Gastrocnemius medialis (tissue), 4 donors: ENCODE measurements at regions of chr4 and their contacts with region 1.

Region 1: DNA sequence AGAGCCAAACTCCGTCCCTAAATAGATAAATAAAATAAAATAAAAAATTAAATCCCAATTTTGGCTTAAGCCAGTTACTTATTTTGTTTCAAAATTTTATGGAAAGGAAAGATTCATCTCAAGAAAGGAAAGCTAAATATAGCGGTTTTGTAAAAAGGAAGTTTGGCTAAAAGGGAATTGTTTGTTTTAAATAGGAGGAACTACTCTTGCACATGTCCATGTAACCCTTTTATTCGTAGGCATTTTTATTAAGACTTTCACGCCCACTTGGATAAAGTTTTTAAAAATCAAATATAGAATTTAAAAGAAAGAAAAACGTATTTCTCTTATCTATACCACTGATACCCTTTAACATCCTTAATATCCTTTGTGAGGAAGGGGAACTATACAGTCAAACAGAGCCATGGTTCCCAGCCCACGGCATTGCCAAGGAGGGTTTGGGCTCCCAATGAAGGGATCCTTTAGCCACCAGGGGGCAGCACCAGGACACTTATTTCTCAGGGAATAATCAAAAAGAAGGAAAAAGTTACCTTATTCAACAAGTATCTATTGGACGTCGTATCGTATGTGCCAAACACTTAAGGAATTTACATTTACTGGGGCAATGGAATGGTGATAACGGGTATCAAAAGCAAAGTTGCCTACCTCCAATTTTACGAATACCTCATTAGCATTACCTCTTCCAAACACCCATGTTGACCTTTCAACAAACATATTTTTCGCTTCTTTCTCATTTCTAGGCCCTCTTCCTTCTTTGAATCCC is 27.7 kb downstream of the CDKN2AIP start:
- DNase-seq: peak; percentile 58 to 68
- ATAC-seq: peak; percentile 85 to 86
- H3K4me3 ChIP-seq: peak overlapping the region in 3 of 4 donors; percentile 11 to 27 (median 14)
- H3K27ac ChIP-seq: no peak overlapping the region
- H3K4me1 ChIP-seq: peaks cover 0 to 4% of the 10 kb centered on the region in 2 donors
- H3K27me3 ChIP-seq: no peaks in the 10 kb centered on the region
- CTCF ChIP-seq: peak; percentile 74 to 93 (median 85)
- POLR2A ChIP-seq: no peak

Region 2: GRCh38 chr4:183335369-183335940 is 136.7 kb before region 1 on chr4:
- in situ Hi-C with region 1: no loop called
- intact Hi-C with region 1: no loop called
- DNase-seq: no peak
- ATAC-seq: no peak
- H3K4me3 ChIP-seq: no peak overlapping the region
- H3K27ac ChIP-seq: no peak overlapping the region
- H3K4me1 ChIP-seq: no peaks in the 10 kb centered on the region
- H3K27me3 ChIP-seq: no peaks in the 10 kb centered on the region
- CTCF ChIP-seq: no peak
- POLR2A ChIP-seq: no peak

Region 3: DNA sequence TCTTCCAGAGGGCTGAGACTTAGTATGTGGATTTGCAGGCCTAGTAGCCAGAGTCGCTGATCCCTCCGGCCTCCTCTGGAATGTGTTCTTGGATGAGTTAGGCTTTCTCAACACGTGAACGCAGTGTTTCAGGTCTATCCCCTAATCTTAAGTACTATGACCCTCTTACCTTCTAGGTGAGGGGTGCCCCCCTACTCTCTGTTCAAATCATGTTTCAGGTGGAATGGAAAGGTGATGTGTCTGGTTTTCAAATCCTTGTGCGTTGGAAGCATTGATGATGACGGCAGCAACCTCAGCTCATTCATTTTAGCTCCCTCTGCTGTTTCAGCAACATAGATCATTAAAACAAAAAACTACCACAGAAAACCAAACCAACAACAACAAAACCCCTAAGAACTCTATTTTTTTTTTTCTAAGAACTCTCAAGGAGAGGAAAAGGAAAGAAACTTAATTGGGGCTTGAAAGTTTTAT is 130.5 kb after region 1 on chr4:
- in situ Hi-C with region 1: loop called in 2 of 4 experiments (anchors 5 kb)
- intact Hi-C with region 1: loop called (anchors 1 kb)
- DNase-seq: no peak
- ATAC-seq: peak in 1 of 2 donors; percentile 46
- H3K4me3 ChIP-seq: no peak overlapping the region
- H3K27ac ChIP-seq: peak overlapping the region in 3 of 4 donors; percentile 7 to 28 (median 24)
- H3K4me1 ChIP-seq: peaks cover 0 to 5% of the 10 kb centered on the region in 2 donors
- H3K27me3 ChIP-seq: no peaks in the 10 kb centered on the region
- CTCF ChIP-seq: peak; percentile 35 to 51 (median 42)
- POLR2A ChIP-seq: no peak

Region 4: DNA sequence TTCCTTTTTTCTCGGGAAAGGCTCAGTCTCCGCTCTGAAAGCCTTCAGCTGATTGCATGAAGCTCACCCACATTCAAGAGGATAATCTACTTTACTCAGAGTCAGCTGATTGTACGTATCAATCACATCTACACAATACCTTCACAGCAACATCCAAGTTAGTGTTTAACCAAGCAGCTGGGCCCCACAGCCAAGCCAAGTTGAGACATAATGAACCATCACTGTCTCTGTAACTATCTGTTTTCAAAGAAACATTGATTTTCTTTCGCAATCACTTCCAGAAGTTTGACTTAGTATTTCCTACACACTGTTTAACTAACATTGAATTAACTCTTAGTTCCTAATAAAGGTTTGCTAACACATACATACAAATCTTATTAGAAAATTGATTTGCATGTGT is 146.6 kb after region 1 on chr4:
- in situ Hi-C with region 1: no loop called
- intact Hi-C with region 1: loop called (anchors 1 kb)
- DNase-seq: no peak
- ATAC-seq: peak; percentile 56 to 64
- H3K4me3 ChIP-seq: peak overlapping the region in 1 of 4 donors; percentile 30
- H3K27ac ChIP-seq: peak overlapping the region; percentile 69 to 81 (median 76)
- H3K4me1 ChIP-seq: peaks cover 7 to 9% of the 10 kb centered on the region in 2 donors
- H3K27me3 ChIP-seq: no peaks in the 10 kb centered on the region
- CTCF ChIP-seq: no peak
- POLR2A ChIP-seq: no peak

Region 5: GRCh38 chr4:183645326-183645725 is 173.2 kb after region 1 on chr4:
- in situ Hi-C with region 1: loop called in 2 of 4 experiments (anchors 5 to 10 kb)
- intact Hi-C with region 1: no loop called
- DNase-seq: no peak
- ATAC-seq: no peak
- H3K4me3 ChIP-seq: no peak overlapping the region
- H3K27ac ChIP-seq: no peak overlapping the region
- H3K4me1 ChIP-seq: no peaks in the 10 kb centered on the region
- H3K27me3 ChIP-seq: no peaks in the 10 kb centered on the region
- CTCF ChIP-seq: no peak
- POLR2A ChIP-seq: no peak

Region 6: DNA sequence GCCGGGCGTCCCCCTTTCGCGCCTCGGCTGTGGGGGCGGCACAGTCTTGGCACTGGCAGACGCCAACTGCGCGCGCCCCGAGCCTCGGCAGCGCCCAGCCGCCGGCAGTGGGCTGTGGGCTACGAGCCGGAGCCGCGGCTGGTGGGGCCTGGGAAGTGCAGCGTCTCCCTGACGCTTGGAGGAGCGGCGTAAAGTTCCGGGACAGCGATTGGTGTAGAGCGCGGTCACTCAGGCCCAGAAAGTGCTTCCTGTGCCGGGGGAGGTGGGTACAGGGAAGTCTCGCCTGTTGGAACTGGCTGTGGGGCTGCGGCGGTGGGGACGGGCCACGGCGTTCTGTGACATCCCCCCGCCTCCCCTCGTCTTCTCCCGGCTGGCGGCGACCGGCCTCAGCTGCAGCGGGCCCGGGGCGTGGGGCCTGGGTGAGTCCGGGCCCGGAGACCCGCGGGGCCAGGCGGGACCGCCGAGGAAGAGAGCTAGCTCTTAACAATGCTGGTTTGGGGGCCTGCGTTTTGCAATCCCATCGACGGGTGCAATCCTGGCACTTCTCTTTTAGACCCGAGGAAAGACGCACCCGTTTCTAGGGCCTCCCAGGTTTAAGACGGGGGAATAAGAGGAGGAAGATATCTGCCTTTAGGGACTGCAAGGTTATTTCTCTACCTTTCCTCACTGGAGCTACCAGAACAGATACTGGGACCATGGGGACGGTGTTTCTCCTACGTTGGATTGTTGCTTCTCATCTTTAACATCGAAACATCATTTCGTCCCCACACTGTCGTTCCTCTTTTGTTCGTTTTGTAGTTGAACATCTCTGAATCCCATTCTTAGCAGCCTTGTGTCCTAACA is 187.1 kb after region 1 on chr4 and contains the starts of genes RWDD4 and TRAPPC11:
- in situ Hi-C with region 1: loop called in 2 of 4 experiments (anchors 10 kb)
- intact Hi-C with region 1: loop called (anchors 5 kb)
- DNase-seq: peak; percentile 97 to 98
- ATAC-seq: peak; percentile 99 to 100
- H3K4me3 ChIP-seq: peak within 1 kb of the TSS; percentile 72 to 99 (median 76)
- H3K27ac ChIP-seq: peak within 1 kb of the TSS; percentile 82 to 96 (median 94)
- H3K4me1 ChIP-seq: peaks cover 21 to 32% of the 10 kb centered on the region in 2 donors
- H3K27me3 ChIP-seq: no peaks in the 10 kb centered on the region
- CTCF ChIP-seq: peak in 4 of 5 experiments; percentile 32 to 57 (median 42)
- POLR2A ChIP-seq: peak; percentile 95
- total RNA-seq, gene RWDD4: 34.6 to 65.2 (median 51.9) TPM
- total RNA-seq, gene TRAPPC11: 19.3 to 31.7 (median 20.8) TPM

Region 7: GRCh38 chr4:183747931-183748670 is 276.0 kb after region 1 on chr4:
- in situ Hi-C with region 1: no loop called
- intact Hi-C with region 1: no loop called
- DNase-seq: peak in 1 of 2 donors; percentile 72
- ATAC-seq: peak; percentile 70 to 84
- H3K4me3 ChIP-seq: no peak overlapping the region
- H3K27ac ChIP-seq: peak overlapping the region; percentile 79 to 90 (median 80)
- H3K4me1 ChIP-seq: peaks cover 6 to 17% of the 10 kb centered on the region in 2 donors
- H3K27me3 ChIP-seq: no peaks in the 10 kb centered on the region
- CTCF ChIP-seq: no peak
- POLR2A ChIP-seq: no peak

Region 8: DNA sequence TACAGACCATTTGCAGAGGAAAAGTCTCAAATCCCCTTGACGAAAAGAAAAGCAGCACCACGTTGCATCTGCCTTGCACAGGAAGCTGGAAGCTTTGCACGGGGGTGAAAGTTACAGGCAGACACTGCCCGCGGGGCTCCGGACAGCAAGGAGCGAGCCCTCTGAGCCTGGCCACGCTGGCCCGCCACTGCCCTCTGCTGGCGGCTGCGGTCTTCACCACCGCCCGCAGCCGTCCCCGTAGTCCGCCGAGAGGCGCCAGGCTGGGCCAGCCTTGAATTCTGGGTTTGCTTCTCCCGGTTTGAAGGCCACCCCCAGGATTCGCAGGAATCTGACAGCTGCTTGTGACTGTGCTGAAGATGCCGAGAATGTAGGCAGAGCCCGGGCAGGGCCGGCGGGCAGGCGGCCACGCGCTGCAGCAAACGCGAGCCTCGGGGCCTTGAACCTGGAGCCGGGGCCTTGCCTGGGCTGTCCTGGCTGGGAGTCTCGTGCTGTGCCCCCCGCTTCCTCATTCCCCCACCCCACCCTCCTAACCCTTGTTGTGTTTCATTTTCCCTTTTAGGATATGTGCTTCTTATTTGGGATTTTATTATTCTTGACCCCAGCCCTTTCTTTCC is 696.4 kb after region 1 on chr4:
- in situ Hi-C with region 1: no loop called
- intact Hi-C with region 1: loop called (anchors 5 kb)
- DNase-seq: peak; percentile 25 to 39
- ATAC-seq: peak; percentile 81 to 91
- H3K4me3 ChIP-seq: peak overlapping the region in 1 of 4 donors; percentile 12
- H3K27ac ChIP-seq: no peak overlapping the region
- H3K4me1 ChIP-seq: peaks cover 0 to 4% of the 10 kb centered on the region in 2 donors
- H3K27me3 ChIP-seq: no peaks in the 10 kb centered on the region
- CTCF ChIP-seq: peak; percentile 85 to 98 (median 88)
- POLR2A ChIP-seq: no peak